ENCODE measurements at regions of chr13 and their contacts with region 1.

Region 1: GRCh38 chr13:101514788-101515187 is 62.3 kb downstream of the ITGBL1 start:
- DNase-seq: no peak

Region 2: DNA sequence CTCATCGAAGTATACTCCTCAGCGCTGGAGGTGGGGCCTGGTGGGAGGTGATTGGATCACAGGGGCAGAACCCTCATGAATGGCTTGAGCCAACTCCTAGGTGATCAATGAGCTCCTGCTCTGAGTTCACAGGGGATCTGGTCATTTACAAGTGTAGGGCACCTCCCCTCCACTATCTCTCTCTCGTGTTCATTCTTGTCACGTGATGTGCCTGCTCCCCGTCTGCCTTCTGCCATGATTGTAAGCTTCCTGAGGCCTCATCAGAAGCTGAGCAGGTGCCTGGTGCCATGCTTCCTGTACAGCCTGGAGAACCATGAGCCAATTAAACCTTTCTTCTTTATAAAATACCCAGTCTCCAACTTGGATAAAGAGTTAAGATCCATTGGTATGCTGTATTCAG is 159.9 kb before region 1 on chr13:
- intact Hi-C with region 1: no loop called
- DNase-seq: no peak

Region 3: DNA sequence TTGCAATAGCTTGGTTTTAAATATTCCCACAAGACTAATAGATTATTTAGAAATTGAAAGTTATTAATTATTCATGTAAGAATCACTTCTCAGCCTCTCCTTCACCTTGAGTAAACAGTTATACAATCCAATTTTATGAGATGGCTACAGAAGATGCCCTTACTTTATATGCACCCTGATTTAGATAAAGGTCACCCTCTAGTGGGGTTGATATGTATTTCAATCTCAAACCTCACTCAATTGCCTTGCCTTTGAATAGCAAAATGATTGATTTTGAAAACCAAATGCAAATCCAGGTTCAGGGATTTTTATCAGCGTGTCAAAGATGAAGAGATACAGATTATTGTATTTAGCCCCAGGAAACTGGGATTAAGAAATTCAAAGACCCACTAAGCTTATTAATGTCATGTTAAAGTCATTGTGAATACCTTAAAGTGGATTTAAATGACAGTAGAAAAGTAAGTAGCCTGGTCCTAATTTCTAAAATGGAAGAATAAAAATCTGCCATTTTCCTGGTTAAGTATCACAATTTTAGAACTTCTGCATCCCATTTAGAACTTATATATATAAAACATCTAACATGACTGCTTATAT is 242.8 kb after region 1 on chr13:
- intact Hi-C with region 1: loop called (anchors 5 kb)
- DNase-seq: no peak